ENCODE measurements at regions of chr10 and their contacts with region 1.

Region 1: DNA sequence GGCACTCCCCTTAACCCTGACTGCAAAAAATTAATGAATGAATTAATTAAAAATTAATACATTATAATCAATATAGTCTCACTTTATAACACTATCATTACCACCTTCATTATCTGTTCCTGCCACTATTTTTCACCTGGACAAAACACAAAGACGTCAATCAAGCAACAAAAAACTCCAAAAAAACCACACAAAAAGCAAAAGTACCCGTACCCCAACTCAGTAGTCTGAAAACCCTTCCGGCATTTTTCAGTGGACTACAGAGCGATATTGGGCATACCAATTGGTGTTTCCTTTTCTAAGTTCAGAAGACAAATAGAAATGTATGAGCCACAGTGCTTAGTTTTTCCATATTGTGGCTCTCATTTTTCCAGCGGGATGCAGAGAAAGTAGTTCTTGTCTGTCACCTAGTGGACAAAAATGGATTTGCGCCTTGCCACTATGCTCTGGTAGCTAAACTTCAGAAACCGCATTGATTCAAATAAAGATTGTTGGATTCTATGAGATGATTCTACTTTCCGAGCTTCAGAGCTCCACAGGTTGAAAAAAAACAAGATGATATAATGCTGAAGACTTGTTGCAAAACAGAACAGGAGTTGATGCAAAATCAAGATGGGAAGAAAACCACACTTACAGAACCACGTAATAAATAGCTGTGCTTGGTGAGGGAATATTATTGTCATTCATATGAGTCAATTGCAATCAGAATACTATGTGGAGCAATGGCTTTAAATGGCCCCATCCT is 50.6 kb upstream of the ITGB1 start:
- DNase-seq: peak in 4 of 6 donors; percentile 39 to 77 (median 60)
- ATAC-seq: peak; percentile 59 to 83 (median 78)
- H3K4me3 ChIP-seq: peak overlapping the region in 1 of 4 donors; percentile 19
- H3K27ac ChIP-seq: peak overlapping the region in 2 of 4 donors; percentile 64 to 67
- H3K4me1 ChIP-seq: peaks cover 0 to 6% (median 5%) of the 10 kb centered on the region in 3 donors
- H3K27me3 ChIP-seq: no peaks in the 10 kb centered on the region
- CTCF ChIP-seq: peak; percentile 80 to 98 (median 94)

Region 2: DNA sequence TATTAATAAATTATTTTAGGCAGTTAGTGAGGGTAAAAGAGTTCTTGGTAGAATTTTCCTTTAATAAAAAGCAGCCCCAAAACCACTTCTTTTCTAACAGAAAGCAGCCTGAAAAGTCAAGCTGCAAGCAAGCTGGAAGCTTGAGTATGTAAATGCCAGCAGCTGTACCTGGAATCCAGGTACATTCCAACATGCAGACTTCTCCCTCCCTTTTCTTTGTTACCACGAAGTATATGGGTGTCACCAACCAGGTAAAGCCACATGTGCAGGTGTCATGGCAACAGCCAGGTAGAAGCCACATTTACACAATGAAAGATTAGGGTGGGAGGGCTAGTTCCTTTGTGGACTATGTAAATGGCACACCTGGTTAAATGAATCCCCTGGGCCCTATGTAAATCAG is 776.3 kb before region 1 on chr10:
- intact Hi-C with region 1: no loop called
- DNase-seq: no peak
- ATAC-seq: no peak
- H3K4me3 ChIP-seq: no peak overlapping the region
- H3K27ac ChIP-seq: no peak overlapping the region
- H3K4me1 ChIP-seq: no peaks in the 10 kb centered on the region
- H3K27me3 ChIP-seq: no peaks in the 10 kb centered on the region
- CTCF ChIP-seq: no peak

Region 3: DNA sequence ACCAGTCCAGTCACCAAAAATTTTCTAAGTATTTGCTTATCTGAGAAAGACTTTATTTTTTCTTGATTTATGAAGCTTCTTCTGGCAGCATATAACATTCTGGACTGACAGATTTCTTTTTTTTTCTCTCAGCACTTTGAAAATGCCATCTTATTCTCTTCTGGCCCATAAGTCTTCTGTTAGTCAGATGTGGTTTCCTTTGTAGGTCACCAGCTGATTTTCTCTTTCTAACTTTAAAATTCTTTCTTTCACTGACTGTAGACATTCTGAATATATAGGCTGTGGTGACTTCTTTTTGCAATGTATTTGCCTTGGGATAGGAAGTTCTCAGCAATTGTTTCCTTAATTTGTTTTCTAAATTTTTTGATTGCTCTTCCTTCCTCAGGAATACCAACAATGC is 390.2 kb before region 1 on chr10:
- intact Hi-C with region 1: no loop called
- DNase-seq: no peak
- ATAC-seq: no peak
- H3K4me3 ChIP-seq: no peak overlapping the region
- H3K27ac ChIP-seq: no peak overlapping the region
- H3K4me1 ChIP-seq: no peaks in the 10 kb centered on the region
- H3K27me3 ChIP-seq: no peaks in the 10 kb centered on the region
- CTCF ChIP-seq: no peak

Region 4: GRCh38 chr10:32787690-32788284 is 220.9 kb before region 1 on chr10:
- intact Hi-C with region 1: loop called in 1 of 3 experiments (anchors 10 kb)
- DNase-seq: peak in 2 of 6 donors; percentile 46 to 64
- ATAC-seq: no peak
- H3K4me3 ChIP-seq: no peak overlapping the region
- H3K27ac ChIP-seq: no peak overlapping the region
- H3K4me1 ChIP-seq: no peaks in the 10 kb centered on the region
- H3K27me3 ChIP-seq: no peaks in the 10 kb centered on the region
- CTCF ChIP-seq: no peak

Region 5: DNA sequence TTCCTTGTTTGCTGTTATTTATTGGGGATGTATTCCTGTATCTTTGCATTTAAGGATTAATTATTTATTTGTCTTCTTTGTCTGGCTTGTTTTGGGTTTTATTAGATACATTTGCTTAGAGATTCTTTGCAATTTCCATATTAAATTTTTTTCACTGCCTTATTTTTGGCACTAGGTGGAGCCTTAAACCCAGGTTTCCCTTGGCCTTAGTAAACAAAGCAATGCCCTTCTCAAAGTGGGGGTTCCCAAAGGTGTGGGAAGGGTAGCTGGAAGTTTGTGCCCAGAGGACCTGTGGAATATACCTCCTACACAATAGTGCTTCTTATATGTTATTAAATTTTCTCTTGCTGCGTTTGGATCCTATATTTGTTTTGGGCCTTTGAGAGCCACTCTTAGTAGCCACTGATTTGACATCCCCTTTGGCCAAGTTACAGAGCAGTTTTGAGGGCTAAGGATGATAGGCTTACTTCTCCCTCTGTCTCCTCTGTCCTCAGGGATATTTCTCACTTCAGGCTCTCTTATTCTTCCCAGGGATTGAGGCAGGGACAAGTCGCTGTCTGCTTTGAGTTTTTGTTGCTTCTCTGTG is 213.0 kb before region 1 on chr10:
- intact Hi-C with region 1: loop called in 2 of 3 experiments (anchors 5 kb)
- DNase-seq: no peak
- ATAC-seq: peak in 3 of 4 donors; percentile 51 to 72 (median 68)
- H3K4me3 ChIP-seq: no peak overlapping the region
- H3K27ac ChIP-seq: no peak overlapping the region
- H3K4me1 ChIP-seq: no peaks in the 10 kb centered on the region
- H3K27me3 ChIP-seq: no peaks in the 10 kb centered on the region
- CTCF ChIP-seq: peak in 3 of 4 donors; percentile 33 to 53 (median 53)

Region 6: GRCh38 chr10:33291053-33291592 is 282.5 kb after region 1 on chr10:
- intact Hi-C with region 1: no loop called
- DNase-seq: no peak
- ATAC-seq: peak in 2 of 4 donors; percentile 43 to 46
- H3K4me3 ChIP-seq: no peak overlapping the region
- H3K27ac ChIP-seq: no peak overlapping the region
- H3K4me1 ChIP-seq: peaks cover 5 to 22% (median 11%) of the 10 kb centered on the region in 3 donors
- H3K27me3 ChIP-seq: no peaks in the 10 kb centered on the region
- CTCF ChIP-seq: no peak